ENCODE measurements at regions of chr10 and their contacts with region 1.

Region 1: DNA sequence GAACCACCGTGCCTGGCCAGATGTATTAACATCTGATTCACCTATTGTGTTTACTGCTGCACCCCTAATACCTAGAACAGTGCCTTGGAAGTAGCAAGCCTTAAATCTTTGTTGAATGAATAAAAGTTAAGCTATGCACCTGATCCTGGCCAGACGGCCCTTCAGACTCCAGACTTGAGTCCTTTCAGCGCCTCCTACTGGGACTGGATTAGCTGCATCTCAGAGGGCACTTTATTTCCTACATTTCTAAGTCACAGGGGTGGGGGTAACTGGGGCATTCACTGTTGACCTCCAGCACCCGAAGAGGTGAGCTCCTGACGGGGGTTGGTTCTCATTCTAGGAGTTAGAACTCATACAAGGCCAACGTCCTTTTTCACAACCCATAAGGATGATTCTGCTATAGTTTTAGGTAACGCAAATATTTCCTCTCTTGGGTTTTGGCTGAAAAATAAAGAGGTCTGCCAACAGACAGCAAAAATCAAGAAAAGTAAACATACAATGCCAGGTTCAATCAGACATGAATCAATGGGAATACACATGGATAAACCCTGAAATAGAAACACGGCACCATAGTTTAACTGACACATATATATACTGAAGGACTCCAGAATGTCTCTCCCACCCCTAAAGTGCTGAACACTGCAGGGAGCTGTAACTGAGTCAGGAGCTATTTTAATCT is 48.0 kb upstream of the DLG5 start:
- DNase-seq: peak in 2 of 7 donors; percentile 25 to 62
- H3K4me3 ChIP-seq: no peak overlapping the region
- H3K27ac ChIP-seq: peak overlapping the region in 1 of 5 donors; percentile 29
- H3K4me1 ChIP-seq: peaks cover 20 to 21% of the 10 kb centered on the region in 2 donors
- H3K27me3 ChIP-seq: no peaks in the 10 kb centered on the region
- CTCF ChIP-seq: no peak
- POLR2A ChIP-seq: no peak

Region 2: DNA sequence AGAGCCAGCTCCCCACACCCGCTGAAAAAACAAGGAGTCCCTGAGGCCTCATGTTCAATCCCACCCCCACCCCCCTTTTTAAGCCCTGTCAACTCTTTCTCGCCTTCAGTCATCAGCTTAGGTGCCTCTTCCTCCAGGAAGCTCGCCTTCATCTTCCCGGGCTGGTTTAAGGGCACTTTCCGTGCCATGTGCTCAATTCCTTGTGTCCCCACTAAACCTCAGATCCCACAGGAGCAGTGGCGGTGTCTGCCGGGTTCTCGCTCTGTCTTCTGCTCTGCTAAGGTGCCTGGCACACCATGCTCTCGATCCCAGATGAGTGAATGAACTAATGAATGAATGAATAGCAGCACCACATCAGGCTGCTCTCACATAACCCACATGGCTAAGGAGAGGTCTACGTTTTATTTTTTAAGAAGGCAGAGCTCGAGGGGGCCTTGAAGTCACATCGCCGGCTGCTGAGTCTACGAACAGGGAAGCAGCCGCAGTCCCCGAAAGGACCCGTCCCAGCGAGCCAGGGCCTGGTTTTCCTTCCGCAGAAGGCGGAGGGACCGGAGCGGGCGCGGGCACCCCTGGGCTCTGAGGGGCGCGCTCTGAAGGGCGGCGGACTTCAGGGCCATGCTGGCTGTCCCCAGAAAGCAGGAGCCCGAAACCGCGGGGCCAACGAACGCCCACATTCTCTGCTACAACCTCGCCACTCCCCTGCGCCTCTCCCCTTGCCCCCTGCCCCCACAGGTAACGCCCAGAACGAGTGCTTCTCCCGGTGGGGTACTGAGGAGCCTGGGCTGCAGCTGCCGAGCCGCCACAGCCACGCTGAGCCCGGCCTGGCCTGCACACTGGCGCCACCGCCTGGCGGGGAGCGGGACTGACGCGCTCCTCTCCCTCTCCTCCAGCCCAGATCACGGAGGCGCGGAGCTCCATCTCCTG is 263.5 kb before region 1 on chr10:
- intact Hi-C with region 1: no loop called
- DNase-seq: peak; percentile 40 to 86 (median 81)
- H3K4me3 ChIP-seq: peak overlapping the region in 2 of 4 donors; percentile 29 to 62
- H3K27ac ChIP-seq: no peak overlapping the region
- H3K4me1 ChIP-seq: peaks cover 3 to 6% of the 10 kb centered on the region in 2 donors
- H3K27me3 ChIP-seq: peaks cover 6% of the 10 kb centered on the region
- CTCF ChIP-seq: peak; percentile 76 to 98 (median 94)
- POLR2A ChIP-seq: no peak

Region 3: DNA sequence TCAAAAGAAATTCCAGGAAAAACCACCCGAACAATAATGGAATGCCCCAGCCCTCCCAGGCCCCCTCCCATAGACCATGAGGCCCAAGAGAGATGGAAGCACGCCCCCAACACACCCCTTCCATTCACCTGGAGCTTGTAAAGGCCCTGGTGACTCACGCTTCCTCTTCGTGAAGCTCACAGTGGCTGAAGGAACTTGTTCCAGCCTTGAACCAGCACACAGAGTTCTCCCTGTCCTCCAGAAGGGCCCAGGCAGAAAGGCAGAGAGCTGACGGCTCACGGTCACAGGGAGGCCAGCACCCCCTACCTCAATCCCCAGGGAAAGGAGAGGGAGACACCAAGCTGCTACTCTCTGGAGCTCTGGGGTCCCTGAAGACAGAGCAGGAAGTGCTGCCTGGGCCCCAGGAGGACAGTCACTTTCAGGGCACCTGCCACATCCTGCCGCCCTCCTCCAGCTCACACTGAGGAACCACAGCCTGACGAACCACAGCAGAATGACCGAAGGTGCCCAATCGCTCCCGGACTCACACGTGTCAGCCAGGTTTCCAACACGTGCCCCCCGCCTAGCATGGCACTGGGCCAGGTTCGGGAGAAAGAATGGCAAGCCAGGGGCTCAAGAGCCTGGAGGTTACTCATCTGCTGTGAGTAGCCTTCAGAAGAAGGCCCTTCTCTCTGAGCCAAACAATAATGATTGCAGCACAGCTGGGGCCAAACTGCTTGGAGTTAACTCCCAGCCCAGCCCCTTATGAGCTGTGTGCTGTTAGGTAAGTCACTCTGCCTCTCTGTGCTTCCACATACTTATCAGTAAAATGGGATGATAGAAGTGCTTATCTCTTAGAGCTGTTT is 100.8 kb before region 1 on chr10:
- intact Hi-C with region 1: no loop called
- DNase-seq: peak; percentile 80 to 95 (median 93)
- H3K4me3 ChIP-seq: peak overlapping the region in 1 of 4 donors; percentile 28
- H3K27ac ChIP-seq: peak overlapping the region; percentile 74 to 97 (median 94)
- H3K4me1 ChIP-seq: peaks cover 78 to 79% of the 10 kb centered on the region in 2 donors
- H3K27me3 ChIP-seq: no peaks in the 10 kb centered on the region
- CTCF ChIP-seq: peak in 1 of 6 experiments; percentile 8
- POLR2A ChIP-seq: peak; percentile 68 to 85

Region 4: DNA sequence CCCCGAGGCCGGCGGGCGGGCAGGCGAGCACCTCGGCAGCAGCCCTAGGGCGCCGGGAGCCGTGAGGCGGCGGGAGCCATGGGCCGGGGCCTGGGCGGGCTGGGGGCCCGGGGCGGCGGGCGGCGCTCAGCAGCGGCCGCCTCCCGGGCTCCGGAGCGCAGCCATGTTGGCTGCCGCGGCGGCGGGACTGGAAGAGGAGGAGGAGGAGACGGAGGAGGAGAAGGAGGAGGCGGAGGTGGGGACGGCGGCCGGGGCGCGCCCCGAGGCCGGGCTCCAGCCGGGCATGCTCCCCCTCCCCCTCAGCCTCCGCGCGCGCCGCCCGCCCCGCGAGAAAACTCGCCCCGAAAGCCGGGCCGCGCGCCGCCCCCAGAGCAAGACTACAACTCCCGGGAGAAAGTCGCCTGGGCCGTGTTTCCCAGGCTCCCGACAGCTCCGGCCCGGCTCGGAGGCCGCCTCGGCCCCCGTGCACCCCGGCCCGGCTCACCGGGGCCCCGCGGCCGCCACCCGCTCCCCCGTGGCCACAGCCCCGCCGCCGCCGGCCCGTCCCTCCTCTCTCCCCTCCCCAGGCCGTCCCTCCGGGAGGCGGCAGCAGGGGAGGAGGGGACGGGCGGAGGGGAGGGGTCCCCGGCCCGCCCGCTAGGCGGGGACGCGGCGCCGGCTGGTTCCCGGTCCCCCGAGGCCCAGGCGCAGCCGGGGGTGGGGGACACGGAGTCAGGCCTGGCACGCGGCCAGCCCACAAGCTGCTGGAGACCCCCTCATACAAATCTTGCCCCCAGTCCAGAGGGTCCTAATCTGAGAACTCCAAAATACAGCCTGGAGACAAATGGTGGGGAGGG is 47.8 kb before region 1 on chr10 and contains the start of gene DLG5:
- intact Hi-C with region 1: loop called in 1 of 2 experiments (anchors 5 kb)
- DNase-seq: peak; percentile 74 to 85 (median 77)
- H3K4me3 ChIP-seq: peak within 1 kb of the TSS; percentile 35 to 96 (median 82)
- H3K27ac ChIP-seq: peak within 1 kb of the TSS; percentile 41 to 90 (median 83)
- H3K4me1 ChIP-seq: peaks cover 34 to 40% of the 10 kb centered on the region in 2 donors
- H3K27me3 ChIP-seq: no peaks in the 10 kb centered on the region
- CTCF ChIP-seq: peak in 1 of 6 experiments; percentile 13
- POLR2A ChIP-seq: peak; percentile 10 to 71
- total RNA-seq, gene DLG5: 32.6 to 175 (median 125) TPM

Region 5: GRCh38 chr10:78045237-78045636 is 70.7 kb after region 1 on chr10:
- intact Hi-C with region 1: no loop called
- DNase-seq: no peak
- H3K4me3 ChIP-seq: no peak overlapping the region
- H3K27ac ChIP-seq: no peak overlapping the region
- H3K4me1 ChIP-seq: peaks cover 0 to 13% of the 10 kb centered on the region in 2 donors
- H3K27me3 ChIP-seq: no peaks in the 10 kb centered on the region
- CTCF ChIP-seq: no peak
- POLR2A ChIP-seq: no peak